Calu3 (cell line): ENCODE measurements at regions of chr5 and their contacts with region 1.

Region 1: GRCh38 chr5:75566710-75567309 is 44.4 kb upstream of the ANKDD1B start:
- DNase-seq: peak; percentile 44
- H3K4me3 Mint-ChIP-seq: peak overlapping the region; percentile 65
- H3K27ac Mint-ChIP-seq: peak overlapping the region; percentile 80
- H3K4me1 Mint-ChIP-seq: peaks cover 54% of the 10 kb centered on the region
- H3K27me3 Mint-ChIP-seq: no peaks in the 10 kb centered on the region
- CTCF ChIP-seq: no peak

Region 2: GRCh38 chr5:75433814-75434506 is 132.8 kb before region 1 on chr5:
- CTCF ChIA-PET with region 1: no interaction called
- intact Hi-C with region 1: loop called (anchors 10 kb)
- DNase-seq: no peak
- H3K4me3 Mint-ChIP-seq: no peak overlapping the region
- H3K27ac Mint-ChIP-seq: peak overlapping the region; percentile 67
- H3K4me1 Mint-ChIP-seq: peaks cover 36% of the 10 kb centered on the region
- H3K27me3 Mint-ChIP-seq: no peaks in the 10 kb centered on the region
- CTCF ChIP-seq: no peak

Region 3: DNA sequence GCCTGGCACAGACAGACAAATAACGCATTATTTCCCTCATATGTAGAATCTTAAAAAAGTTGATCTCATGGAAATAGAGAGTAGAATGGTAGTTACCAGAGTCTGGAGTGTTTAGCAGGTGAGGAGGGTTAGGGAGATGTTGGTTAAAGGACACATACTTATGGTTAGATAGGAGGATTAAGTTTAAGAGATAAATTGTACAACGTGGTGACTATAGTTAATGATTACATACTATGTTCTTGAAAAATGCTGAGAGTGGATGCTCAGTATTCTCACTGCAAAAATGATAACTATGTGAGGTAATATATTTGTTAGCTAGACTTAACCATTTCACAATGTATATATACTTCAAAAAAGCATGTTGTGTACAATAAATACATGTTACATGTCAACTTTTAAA is 93.3 kb before region 1 on chr5:
- CTCF ChIA-PET with region 1: no interaction called
- intact Hi-C with region 1: loop called (anchors 5 kb)
- DNase-seq: no peak
- H3K4me3 Mint-ChIP-seq: no peak overlapping the region
- H3K27ac Mint-ChIP-seq: no peak overlapping the region
- H3K4me1 Mint-ChIP-seq: peaks cover 42% of the 10 kb centered on the region
- H3K27me3 Mint-ChIP-seq: no peaks in the 10 kb centered on the region
- CTCF ChIP-seq: no peak

Region 4: GRCh38 chr5:75511435-75512384 is 55.1 kb before region 1 on chr5 and contains the starts of genes CERT1 and POLK:
- CTCF ChIA-PET with region 1: interaction called, 5 read pairs
- intact Hi-C with region 1: loop called (anchors 2 kb)
- DNase-seq: peak; percentile 99
- H3K4me3 Mint-ChIP-seq: peak within 1 kb of the TSS; percentile 93
- H3K27ac Mint-ChIP-seq: peak within 1 kb of the TSS; percentile 84
- H3K4me1 Mint-ChIP-seq: peaks cover 41% of the 10 kb centered on the region
- H3K27me3 Mint-ChIP-seq: no peaks in the 10 kb centered on the region
- CTCF ChIP-seq: no peak
- total RNA-seq, gene CERT1: 63.4 and 68.6 TPM in 2 replicates
- total RNA-seq, gene POLK: 34.9 and 36.4 TPM in 2 replicates

Region 5: DNA sequence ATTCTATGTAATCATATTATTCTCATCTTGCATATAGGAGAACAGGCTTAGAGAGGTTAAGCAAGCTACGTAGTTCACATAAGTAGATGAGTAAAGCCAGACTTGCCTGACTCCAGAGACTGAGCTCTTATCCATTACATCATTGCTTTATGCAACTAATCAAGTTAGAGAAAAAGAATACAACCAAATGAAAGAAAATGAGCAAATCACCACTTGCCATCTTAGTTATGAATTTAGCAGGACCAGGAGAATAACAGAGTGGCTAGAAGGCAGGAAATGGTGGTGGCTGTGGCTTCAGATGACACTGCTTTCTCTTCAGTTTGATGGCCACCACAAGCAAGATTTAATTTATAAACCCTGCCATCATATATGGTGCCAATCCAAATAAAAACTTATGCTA is 123.9 kb after region 1 on chr5:
- CTCF ChIA-PET with region 1: no interaction called
- intact Hi-C with region 1: no loop called
- DNase-seq: no peak
- H3K4me3 Mint-ChIP-seq: no peak overlapping the region
- H3K27ac Mint-ChIP-seq: no peak overlapping the region
- H3K4me1 Mint-ChIP-seq: peaks cover 14% of the 10 kb centered on the region
- H3K27me3 Mint-ChIP-seq: no peaks in the 10 kb centered on the region
- CTCF ChIP-seq: no peak